ENCODE measurements at regions of chrX and their contacts with region 1.

Region 1: GRCh38 chrX:124406294-124407014 is 60.1 kb downstream of the SH2D1A start:
- DNase-seq: peak; percentile 85
- H3K4me3 ChIP-seq: no peak overlapping the region
- H3K27ac ChIP-seq: no peak overlapping the region
- H3K4me1 ChIP-seq: no peaks in the 10 kb centered on the region
- H3K27me3 ChIP-seq: no peaks in the 10 kb centered on the region
- CTCF ChIP-seq: peak; percentile 67

Region 2: DNA sequence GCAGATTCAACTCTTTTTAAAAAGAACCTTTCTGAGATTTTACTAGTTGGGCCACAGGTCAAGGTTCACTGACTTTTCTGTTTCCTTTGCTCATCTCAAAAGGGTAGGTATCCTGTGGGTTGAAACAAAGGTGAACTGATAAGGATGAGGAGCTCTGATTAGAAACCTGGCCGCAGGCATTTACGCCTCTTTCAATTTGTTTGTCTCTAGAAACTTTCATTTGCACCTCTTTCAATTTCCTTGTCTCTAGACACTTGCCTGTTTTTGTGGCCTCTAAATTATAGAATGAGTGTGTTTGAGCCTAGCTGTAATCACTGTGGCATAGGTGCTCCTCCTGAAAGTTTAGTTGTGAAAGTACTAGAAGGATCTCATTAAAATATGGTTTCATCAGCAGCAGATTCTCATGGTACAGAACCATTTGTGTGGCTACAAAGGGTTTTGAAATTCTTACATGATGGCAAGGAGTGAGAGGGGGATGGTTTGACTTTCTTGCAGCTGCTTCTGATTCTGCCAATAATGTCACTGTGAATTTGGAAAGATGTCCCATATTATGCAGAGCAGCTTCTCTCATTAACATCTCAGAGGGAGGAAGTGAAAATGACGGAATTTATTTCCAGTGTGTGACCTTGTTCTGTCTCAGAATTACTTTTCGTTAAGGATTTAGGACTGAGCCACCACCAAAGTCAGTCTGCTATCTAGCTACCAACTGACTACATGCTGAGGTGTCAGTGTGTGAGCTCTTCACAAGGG is 82.1 kb after region 1 on chrX:
- CTCF ChIA-PET with region 1: no interaction called
- POLR2A ChIA-PET with region 1: no interaction called
- intact Hi-C with region 1: no loop called
- DNase-seq: no peak
- H3K4me3 ChIP-seq: no peak overlapping the region
- H3K27ac ChIP-seq: no peak overlapping the region
- H3K4me1 ChIP-seq: no peaks in the 10 kb centered on the region
- H3K27me3 ChIP-seq: no peaks in the 10 kb centered on the region
- CTCF ChIP-seq: no peak

Region 3: GRCh38 chrX:125205133-125205917 is 798.9 kb after region 1 on chrX:
- CTCF ChIA-PET with region 1: no interaction called
- POLR2A ChIA-PET with region 1: no interaction called
- intact Hi-C with region 1: loop called (anchors 10 kb)
- DNase-seq: peak; percentile 95
- H3K4me3 ChIP-seq: peak overlapping the region; percentile 72
- H3K27ac ChIP-seq: peak overlapping the region; percentile 76
- H3K4me1 ChIP-seq: peaks cover 16% of the 10 kb centered on the region
- H3K27me3 ChIP-seq: no peaks in the 10 kb centered on the region
- CTCF ChIP-seq: peak; percentile 53